HCT116 (cell line): ENCODE measurements at regions of chr18 and their contacts with region 1.

Region 1: GRCh38 chr18:6096730-6097129 is 201.4 kb upstream of the TMEM200C start:
- DNase-seq: no peak
- ATAC-seq: no peak
- H3K4me3 ChIP-seq: no peak overlapping the region
- H3K27ac ChIP-seq: no peak overlapping the region
- H3K4me1 ChIP-seq: no peaks in the 10 kb centered on the region
- H3K27me3 ChIP-seq: no peaks in the 10 kb centered on the region
- CTCF ChIP-seq: no peak
- POLR2A ChIP-seq: no peak
- RAD21 ChIP-seq: no peak

Region 2: DNA sequence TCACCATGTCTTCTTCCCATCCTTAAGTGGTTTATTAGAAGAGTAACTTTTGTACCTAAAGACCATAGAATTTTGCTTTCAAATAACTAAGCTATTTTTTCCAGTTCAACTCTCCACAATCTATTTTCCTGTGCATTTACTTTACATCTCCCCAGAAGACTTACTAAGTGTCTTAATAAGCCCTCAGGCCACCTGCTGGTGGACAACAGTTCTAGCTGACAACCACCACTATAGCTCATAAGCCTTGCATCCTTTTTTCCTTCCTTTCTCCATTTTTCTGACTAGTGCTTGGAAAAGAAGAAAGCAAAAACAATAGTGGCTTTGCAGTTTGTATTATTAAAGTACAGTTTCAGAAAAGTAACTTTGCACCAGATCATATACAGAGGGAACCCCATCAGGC is 52.0 kb before region 1 on chr18:
- CTCF ChIA-PET with region 1: no interaction called
- POLR2A ChIA-PET with region 1: no interaction called
- RAD21 ChIA-PET with region 1: no interaction called
- intact Hi-C with region 1: no loop called
- DNase-seq: no peak
- ATAC-seq: no peak
- H3K4me3 ChIP-seq: no peak overlapping the region
- H3K27ac ChIP-seq: no peak overlapping the region
- H3K4me1 ChIP-seq: no peaks in the 10 kb centered on the region
- H3K27me3 ChIP-seq: no peaks in the 10 kb centered on the region
- CTCF ChIP-seq: no peak
- POLR2A ChIP-seq: no peak
- RAD21 ChIP-seq: no peak

Region 3: DNA sequence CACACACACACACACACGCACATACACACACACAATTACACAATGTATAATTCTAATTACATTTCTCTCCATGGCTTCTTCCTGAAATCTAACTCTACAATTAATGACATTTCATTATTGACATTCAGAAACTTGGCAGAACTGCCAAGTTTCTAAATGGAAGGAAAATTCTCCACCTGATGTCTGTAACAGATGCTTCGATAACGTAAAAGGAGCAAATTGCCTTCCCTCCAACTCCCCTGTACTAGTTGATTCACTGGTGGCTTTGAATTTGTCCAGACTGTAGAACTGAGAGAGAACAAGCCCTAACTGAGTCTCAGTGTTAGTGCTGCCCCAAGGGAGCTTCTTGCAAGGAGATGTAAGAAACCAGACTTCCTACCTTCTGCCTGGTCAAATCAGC is 53.7 kb after region 1 on chr18:
- CTCF ChIA-PET with region 1: no interaction called
- POLR2A ChIA-PET with region 1: no interaction called
- RAD21 ChIA-PET with region 1: no interaction called
- intact Hi-C with region 1: loop called (anchors 10 kb)
- DNase-seq: no peak
- ATAC-seq: no peak
- H3K4me3 ChIP-seq: no peak overlapping the region
- H3K27ac ChIP-seq: no peak overlapping the region
- H3K4me1 ChIP-seq: no peaks in the 10 kb centered on the region
- H3K27me3 ChIP-seq: no peaks in the 10 kb centered on the region
- CTCF ChIP-seq: no peak
- POLR2A ChIP-seq: no peak
- RAD21 ChIP-seq: no peak

Region 4: DNA sequence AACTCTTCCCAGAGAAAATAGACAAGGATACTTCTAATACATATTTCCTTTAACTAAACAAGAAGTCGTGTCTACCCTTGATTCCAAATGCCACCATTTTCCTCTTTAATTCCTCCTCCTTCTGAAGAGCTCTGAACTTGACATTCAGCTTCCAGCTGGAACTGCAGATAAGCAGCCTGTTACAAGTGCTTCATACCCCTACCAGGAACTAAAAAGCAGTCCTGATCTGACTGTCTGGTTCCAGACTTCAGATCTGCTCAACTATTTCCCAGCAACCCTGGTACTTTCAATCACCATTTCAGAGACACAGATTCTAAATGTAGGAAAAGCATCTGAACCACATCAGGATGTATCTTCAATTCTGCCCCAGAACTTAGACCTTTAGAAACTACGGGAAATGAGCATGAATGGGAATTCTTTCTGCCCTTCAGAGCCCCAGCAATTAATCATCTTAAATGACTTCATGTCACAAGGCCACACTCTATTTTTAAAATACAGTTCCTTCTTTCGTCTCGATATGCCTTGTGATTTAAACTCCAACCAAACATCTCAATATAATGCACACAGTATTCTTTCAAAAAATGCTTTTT is 158.5 kb after region 1 on chr18:
- CTCF ChIA-PET with region 1: no interaction called
- POLR2A ChIA-PET with region 1: no interaction called
- RAD21 ChIA-PET with region 1: no interaction called
- intact Hi-C with region 1: no loop called
- DNase-seq: no peak
- ATAC-seq: no peak
- H3K4me3 ChIP-seq: no peak overlapping the region
- H3K27ac ChIP-seq: no peak overlapping the region
- H3K4me1 ChIP-seq: no peaks in the 10 kb centered on the region
- H3K27me3 ChIP-seq: no peaks in the 10 kb centered on the region
- CTCF ChIP-seq: no peak
- POLR2A ChIP-seq: no peak
- RAD21 ChIP-seq: no peak